Panc1 (cell line): ENCODE measurements at regions of chr18 and their contacts with region 1.

Region 1: GRCh38 chr18:46148810-46149209 is 44.6 kb downstream of the HAUS1 start:
- DNase-seq: peak; percentile 55
- ATAC-seq: peak; percentile 59
- H3K4me3 ChIP-seq: no peak overlapping the region
- H3K27ac ChIP-seq: no peak overlapping the region
- H3K4me1 ChIP-seq: peaks cover 11% of the 10 kb centered on the region
- H3K27me3 ChIP-seq: no peaks in the 10 kb centered on the region
- CTCF ChIP-seq: peak; percentile 63

Region 2: GRCh38 chr18:44723411-44723810 is 1425.4 kb before region 1 on chr18:
- CTCF ChIA-PET with region 1: no interaction called
- POLR2A ChIA-PET with region 1: no interaction called
- in situ Hi-C with region 1: no loop called
- intact Hi-C with region 1: no loop called
- DNase-seq: no peak
- ATAC-seq: no peak
- H3K4me3 ChIP-seq: no peak overlapping the region
- H3K27ac ChIP-seq: no peak overlapping the region
- H3K4me1 ChIP-seq: no peaks in the 10 kb centered on the region
- H3K27me3 ChIP-seq: no peaks in the 10 kb centered on the region
- CTCF ChIP-seq: no peak

Region 3: DNA sequence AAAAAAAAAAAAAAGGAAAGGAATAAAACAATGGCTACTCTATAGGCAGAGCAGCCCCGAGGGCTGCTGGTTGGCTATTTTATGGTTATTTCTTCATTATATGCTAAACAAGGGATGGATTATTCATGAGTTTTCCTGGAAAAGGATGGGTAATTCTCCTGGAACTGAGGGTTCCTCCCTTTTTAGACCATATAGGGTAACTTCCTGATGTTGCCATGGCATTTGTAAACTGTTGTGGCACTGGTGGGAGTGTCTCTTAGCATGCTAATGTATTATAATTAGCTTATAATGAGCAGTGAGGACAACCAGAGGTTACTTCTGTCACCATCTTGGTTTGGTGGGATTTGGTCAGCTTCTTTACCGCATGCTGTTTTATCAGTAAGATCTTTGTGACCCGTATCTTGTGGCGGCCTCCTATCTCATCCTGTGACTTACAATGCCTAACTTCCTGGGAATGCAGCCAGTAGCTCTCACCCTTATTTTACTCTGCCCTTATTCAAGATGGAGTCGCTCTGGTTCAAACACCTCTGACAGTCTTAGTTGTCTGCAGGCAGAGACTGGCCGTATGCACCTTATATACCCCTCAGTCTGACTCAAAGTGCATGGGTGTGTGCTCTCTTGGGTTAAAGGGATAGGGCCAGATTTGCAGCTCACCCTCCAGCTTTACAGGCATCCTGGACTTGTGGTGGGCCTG is 13.0 kb after region 1 on chr18:
- CTCF ChIA-PET with region 1: no interaction called
- POLR2A ChIA-PET with region 1: interaction called, 14 read pairs
- in situ Hi-C with region 1: no loop called
- intact Hi-C with region 1: no loop called
- DNase-seq: no peak
- ATAC-seq: no peak
- H3K4me3 ChIP-seq: no peak overlapping the region
- H3K27ac ChIP-seq: no peak overlapping the region
- H3K4me1 ChIP-seq: no peaks in the 10 kb centered on the region
- H3K27me3 ChIP-seq: no peaks in the 10 kb centered on the region
- CTCF ChIP-seq: no peak